Calu3 (cell line): ENCODE measurements at regions of chr16 and their contacts with region 1.

Region 1: DNA sequence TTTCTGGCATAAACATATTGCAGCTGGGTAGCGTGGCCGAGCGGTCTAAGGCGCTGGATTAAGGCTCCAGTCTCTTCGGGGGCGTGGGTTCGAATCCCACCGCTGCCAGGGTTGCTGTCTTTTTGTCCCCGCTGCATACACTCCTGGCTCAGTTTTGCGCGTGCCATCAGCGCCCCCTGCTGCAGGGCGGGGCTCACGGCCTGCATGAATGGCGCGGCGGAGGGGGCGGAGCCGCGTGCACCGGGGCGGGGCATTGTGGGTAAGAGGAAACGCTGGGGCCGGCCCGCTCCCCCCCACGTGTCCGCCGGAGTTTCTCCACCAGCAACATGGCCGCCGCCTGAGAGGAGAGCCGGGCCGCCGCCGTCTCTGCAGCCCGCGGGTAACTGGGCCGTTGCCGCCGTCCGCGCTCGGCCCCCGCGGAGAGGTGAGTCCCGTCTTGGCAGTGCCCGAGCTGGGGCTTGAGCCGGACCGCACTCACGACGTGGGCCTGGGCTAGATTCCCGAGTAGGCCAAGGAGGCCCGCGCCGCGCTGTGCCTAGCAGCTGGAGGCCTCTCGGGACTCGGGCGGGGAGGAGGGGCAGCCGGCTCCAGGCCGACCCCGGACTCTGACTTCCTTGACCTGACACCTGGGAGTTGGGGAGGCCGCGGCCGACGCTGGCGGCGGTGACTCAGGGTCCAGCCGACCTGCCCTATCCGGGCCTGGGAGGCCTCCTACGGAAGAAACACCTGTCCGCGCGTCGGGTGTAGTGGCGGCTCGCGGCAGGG is at the start of gene POLR3E:
- DNase-seq: peak; percentile 100
- H3K4me3 Mint-ChIP-seq: peak within 1 kb of the TSS; percentile 97
- H3K27ac Mint-ChIP-seq: peak within 1 kb of the TSS; percentile 99
- H3K4me1 Mint-ChIP-seq: peaks cover 22% of the 10 kb centered on the region
- H3K27me3 Mint-ChIP-seq: no peaks in the 10 kb centered on the region
- CTCF ChIP-seq: peak; percentile 94
- total RNA-seq, gene POLR3E: 95.2 and 96.4 TPM in 2 replicates

Region 2: DNA sequence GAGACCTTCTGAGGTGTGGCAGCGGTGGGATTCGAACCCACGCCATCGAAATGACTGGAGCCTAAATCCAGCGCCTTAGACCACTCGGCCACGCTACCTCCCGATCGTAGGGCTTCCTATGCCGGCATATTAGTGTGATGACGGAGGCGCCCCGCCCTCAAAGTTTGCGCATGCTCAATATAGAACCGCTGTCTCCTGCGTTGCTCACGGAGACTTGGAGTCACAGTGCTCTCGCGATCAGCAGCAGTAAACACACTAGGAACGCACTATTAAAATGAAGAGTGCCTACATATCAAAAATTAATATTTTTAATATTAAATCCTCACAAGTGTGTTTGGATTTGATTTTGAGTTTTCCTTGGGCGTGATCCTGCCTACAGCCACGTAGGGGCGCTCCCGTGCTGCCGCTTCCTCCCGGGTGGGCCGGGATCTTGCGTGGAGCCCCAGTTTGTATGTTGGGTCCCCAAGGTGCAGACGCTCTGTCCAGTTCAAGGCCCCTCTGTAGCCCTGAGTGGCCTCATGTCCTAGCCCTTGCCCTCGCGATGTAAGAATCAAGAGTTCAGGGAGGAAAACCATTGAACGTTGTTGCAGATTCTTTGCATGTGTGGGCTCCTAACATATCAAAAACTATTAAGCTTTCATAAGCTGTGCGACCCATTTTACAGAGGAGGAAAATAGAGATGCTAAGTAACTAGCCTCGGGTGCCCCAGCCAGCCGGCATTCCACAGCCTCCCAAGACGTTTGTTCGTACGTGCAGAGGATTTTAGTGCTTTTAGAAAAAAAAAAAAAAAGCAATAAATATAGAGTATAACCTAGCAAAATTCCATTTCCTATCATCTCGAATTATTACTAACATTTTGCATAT is 101.4 kb before region 1 on chr16:
- CTCF ChIA-PET with region 1: interaction called, 4 read pairs
- intact Hi-C with region 1: loop called (anchors 1 kb)
- DNase-seq: peak; percentile 94
- H3K4me3 Mint-ChIP-seq: peak overlapping the region; percentile 67
- H3K27ac Mint-ChIP-seq: peak overlapping the region; percentile 100
- H3K4me1 Mint-ChIP-seq: peaks cover 35% of the 10 kb centered on the region
- H3K27me3 Mint-ChIP-seq: peaks cover 8% of the 10 kb centered on the region
- CTCF ChIP-seq: peak; percentile 94

Region 3: DNA sequence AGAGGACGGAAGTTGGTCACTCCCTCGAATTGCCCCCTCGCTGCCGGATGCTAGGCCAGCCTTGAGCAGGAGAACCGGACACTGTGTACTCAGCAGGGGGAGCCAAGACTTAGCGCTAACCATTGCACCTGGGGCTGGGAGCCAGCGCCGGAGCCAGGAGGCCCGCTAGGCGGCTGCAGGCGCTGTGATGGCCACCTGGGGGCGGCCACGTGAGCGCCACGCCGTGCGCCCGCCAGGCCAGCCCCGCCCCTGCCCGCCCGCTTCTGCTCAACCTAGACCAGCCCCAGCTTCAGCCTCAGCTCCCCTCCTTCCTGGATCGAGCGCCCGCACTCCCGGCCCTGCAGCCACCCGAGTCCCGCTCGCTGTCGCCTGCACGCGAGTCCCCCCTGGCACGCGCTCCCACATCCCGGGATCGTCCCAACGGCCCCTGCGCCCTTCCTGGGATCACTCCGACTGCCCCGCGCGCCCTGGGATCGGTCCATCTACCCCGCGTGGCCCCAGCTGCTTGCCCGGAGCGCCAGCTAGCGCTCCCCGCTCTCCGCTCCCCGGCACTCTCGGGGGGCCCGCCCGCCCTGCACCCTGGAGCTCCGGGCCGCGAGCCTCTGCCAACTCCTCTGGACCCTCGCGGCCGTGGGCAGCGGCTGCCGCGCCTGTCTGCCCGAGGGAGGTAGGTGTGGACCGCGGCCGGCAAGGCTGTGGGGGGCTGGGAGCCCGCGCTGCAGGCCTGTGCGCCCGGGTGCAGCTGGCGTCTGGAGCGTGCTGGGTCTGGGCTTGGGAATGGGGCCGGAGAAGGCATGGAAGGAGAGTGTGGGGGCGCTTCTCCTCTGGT is 91.1 kb before region 1 on chr16 and contains the start of gene EEF2K:
- CTCF ChIA-PET with region 1: interaction called, 15 read pairs
- intact Hi-C with region 1: loop called (anchors 1 kb)
- DNase-seq: peak; percentile 98
- H3K4me3 Mint-ChIP-seq: peak within 1 kb of the TSS; percentile 95
- H3K27ac Mint-ChIP-seq: peak within 1 kb of the TSS; percentile 91
- H3K4me1 Mint-ChIP-seq: peaks cover 22% of the 10 kb centered on the region
- H3K27me3 Mint-ChIP-seq: no peaks in the 10 kb centered on the region
- CTCF ChIP-seq: peak; percentile 87
- total RNA-seq, gene EEF2K: 25.8 and 31.8 TPM in 2 replicates

Region 4: DNA sequence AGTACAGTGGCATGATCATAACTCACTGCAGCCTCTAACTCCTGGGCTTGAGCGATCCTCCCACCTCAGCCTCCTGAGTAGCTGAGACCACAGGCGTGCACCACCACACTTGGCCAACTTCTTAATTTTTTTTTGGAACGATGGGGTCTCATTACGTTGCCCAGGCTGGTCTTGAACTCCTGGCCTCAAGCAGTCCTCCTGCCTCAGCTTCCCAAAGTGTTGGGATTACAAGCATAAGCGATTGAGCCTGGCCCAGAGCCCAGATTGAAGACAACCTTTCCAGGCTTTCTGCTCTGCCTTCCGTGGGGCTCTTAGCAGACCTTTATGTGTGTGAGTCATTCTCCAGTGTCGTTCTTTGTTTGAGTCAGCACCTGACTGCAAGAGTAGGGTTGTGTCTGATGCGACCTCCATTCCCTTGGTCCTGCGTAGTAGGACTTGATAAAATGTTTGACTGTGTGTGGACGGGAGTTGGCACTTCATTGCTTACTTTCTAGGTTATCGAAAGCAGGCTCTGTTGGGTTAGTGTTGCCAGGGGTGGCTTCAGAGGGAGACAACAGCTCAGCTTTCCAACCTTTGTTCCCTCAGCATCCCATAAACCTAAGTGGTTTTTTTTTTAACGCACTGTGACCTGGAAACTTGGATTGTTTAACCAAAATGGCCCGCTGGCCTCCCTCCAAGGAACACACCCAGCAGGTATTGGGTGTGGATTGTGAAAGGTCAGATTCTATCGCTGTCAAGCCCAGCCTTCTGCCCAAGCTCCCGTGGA is 64.8 kb before region 1 on chr16:
- CTCF ChIA-PET with region 1: interaction called, 4 read pairs
- intact Hi-C with region 1: loop called (anchors 2 kb)
- DNase-seq: peak; percentile 84
- H3K4me3 Mint-ChIP-seq: peak overlapping the region; percentile 64
- H3K27ac Mint-ChIP-seq: peak overlapping the region; percentile 96
- H3K4me1 Mint-ChIP-seq: peaks cover 22% of the 10 kb centered on the region
- H3K27me3 Mint-ChIP-seq: no peaks in the 10 kb centered on the region
- CTCF ChIP-seq: no peak

Region 5: DNA sequence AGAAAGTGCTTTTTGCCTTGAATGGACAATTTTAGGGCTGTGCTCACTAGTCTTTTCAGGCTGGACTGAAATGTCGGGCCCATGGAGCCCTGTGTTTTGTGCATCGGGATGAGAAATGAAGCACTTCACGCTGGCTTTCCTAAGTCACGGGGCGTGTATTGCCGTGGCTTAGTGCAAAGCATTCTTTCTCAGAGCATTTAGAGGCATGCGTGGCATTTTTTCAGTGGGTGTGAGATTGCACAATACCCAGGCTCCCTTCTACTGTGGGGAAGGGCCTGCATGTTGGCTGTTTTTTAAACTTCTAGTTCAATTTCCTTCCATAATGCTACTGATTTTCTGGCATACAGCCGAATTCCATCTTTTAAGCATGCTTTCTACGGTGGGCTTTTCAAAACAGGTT is 12.7 kb before region 1 on chr16:
- CTCF ChIA-PET with region 1: no interaction called
- intact Hi-C with region 1: no loop called
- DNase-seq: no peak
- H3K4me3 Mint-ChIP-seq: no peak overlapping the region
- H3K27ac Mint-ChIP-seq: no peak overlapping the region
- H3K4me1 Mint-ChIP-seq: no peaks in the 10 kb centered on the region
- H3K27me3 Mint-ChIP-seq: no peaks in the 10 kb centered on the region
- CTCF ChIP-seq: no peak